ENCODE measurements at regions of chr2 and their contacts with region 1.

Region 1: GRCh38 chr2:230124235-230124634 is 55.5 kb upstream of the SLC16A14 start:
- DNase-seq: no peak
- ATAC-seq: no peak
- H3K4me3 ChIP-seq: peak overlapping the region in 1 of 10 donors; percentile 30
- H3K27ac ChIP-seq: peak overlapping the region in 1 of 10 donors; percentile 50
- H3K4me1 ChIP-seq: peaks cover 0 to 48% (median 6%) of the 10 kb centered on the region in 9 donors
- H3K27me3 ChIP-seq: no peaks in the 10 kb centered on the region
- CTCF ChIP-seq: no peak

Region 2: GRCh38 chr2:229118927-229119326 is 1005.3 kb before region 1 on chr2:
- intact Hi-C with region 1: no loop called
- DNase-seq: no peak
- ATAC-seq: no peak
- H3K4me3 ChIP-seq: no peak overlapping the region
- H3K27ac ChIP-seq: no peak overlapping the region
- H3K4me1 ChIP-seq: peaks cover 0 to 2% (median 0%) of the 10 kb centered on the region in 9 donors
- H3K27me3 ChIP-seq: no peaks in the 10 kb centered on the region
- CTCF ChIP-seq: no peak

Region 3: DNA sequence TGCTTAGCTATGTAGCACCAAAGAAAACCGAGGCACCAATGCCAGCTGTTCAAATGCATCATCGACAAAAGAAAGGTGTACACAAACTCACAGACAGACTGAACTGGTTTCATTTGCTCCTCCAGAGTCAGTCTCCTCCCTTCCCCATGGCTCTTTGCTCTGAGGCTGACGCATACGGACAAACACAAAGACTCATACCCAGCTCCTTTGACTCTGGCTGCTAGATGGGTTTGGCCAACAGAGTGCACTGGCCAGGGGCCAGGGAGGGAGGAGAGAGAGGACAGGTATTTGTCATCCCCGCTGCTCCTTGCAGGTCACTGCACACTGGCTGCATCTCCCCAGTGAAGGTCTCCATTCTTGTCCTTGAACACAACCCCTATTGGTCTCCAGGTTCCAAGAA is 450.6 kb before region 1 on chr2:
- intact Hi-C with region 1: loop called in 1 of 10 experiments (anchors 10 kb)
- DNase-seq: no peak
- ATAC-seq: no peak
- H3K4me3 ChIP-seq: no peak overlapping the region
- H3K27ac ChIP-seq: no peak overlapping the region
- H3K4me1 ChIP-seq: no peaks in the 10 kb centered on the region
- H3K27me3 ChIP-seq: peaks cover 0 to 36% (median 23%) of the 10 kb centered on the region in 7 donors
- CTCF ChIP-seq: no peak

Region 4: GRCh38 chr2:230370975-230371374 is 246.7 kb after region 1 on chr2:
- intact Hi-C with region 1: no loop called
- DNase-seq: no peak
- ATAC-seq: no peak
- H3K4me3 ChIP-seq: no peak overlapping the region
- H3K27ac ChIP-seq: no peak overlapping the region
- H3K4me1 ChIP-seq: no peaks in the 10 kb centered on the region
- H3K27me3 ChIP-seq: no peaks in the 10 kb centered on the region
- CTCF ChIP-seq: no peak